A549 (cell line): ENCODE measurements at regions of chr10 and their contacts with region 1.

Region 1: DNA sequence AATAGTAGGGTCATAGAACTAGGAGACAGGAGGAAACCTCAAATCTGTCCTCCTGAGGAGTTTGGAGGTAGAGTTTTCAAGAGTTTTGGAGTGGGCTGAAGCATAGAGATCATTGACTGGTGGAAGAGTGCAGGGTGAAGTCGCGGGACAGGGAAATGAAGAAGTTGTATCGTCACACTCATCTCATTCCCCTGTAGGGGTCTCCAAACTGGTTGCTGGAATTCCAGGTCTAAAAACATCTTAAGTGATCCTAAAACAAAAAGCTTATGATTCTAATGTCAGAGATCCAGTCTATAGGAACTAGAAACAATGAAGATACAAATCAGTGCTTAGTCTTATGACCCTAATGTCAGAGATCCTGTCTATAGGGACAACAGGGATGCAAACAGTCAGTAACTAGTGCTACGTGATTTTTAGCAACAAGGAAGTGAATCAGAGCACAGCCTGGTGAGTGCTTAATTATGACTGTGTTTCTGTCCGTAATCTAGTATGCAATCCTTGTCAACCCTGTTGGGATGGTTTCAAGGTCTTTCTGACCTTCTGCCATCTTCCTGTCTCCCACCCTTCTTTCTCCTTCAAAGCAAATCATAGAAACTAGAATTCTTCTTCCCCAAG is 139.4 kb downstream of the SKIDA1 start:
- DNase-seq: no peak
- ATAC-seq: no peak
- H3K4me3 ChIP-seq: no peak overlapping the region
- H3K27ac ChIP-seq: peak overlapping the region in 1 of 2 experiments; percentile 24; a peak in 1 of 6 replicates
- H3K4me1 ChIP-seq: no peaks in the 10 kb centered on the region
- CTCF ChIP-seq: no peak
- EP300 ChIP-seq: no peak
- POLR2A ChIP-seq: no peak
- RAD21 ChIP-seq: no peak

Region 2: DNA sequence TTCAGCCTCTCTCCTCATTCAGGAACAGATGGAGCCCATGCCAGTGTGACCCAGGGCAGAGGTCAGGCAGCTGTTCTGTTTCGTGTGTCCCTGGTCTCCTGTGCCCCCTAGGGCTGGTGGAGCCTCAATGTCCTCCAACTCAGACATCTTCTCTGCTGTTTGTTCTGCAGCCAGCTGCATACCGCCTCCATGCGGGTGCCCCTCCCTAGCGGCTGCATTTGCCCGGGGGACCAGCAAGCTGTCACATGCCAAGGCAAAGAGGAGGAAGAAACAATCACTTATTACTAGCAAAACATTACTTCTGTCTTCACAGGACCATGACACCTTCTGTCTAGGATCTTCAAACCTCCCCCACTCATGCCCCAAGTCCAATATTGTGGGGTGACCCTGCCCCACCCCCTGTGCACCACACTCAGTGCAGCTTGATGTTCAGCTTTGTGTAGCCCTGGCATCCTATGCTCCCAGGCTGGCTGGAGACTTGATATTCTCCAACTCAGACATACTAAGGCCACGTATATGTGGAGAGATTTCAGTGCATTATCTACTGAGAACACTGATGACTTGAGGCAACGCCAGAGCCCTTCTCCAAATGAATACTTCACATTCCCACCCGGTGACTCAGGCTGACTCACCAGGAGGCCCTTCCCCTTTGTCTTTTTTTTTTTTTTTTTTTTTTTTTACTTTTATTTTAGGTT is 49.5 kb before region 1 on chr10:
- CTCF ChIA-PET with region 1: no interaction called
- POLR2A ChIA-PET with region 1: no interaction called
- DNase-seq: peak; percentile 86 to 97
- ATAC-seq: peak; percentile 88 to 90
- H3K4me3 ChIP-seq: no peak overlapping the region
- H3K27ac ChIP-seq: peak overlapping the region; percentile 95 to 96
- H3K4me1 ChIP-seq: peaks cover 55% of the 10 kb centered on the region
- CTCF ChIP-seq: peak; percentile 31
- EP300 ChIP-seq: peak; percentile 58 to 73; a peak in 3 of 5 replicates
- POLR2A ChIP-seq: no peak
- RAD21 ChIP-seq: peak; percentile 63 to 75

Region 3: DNA sequence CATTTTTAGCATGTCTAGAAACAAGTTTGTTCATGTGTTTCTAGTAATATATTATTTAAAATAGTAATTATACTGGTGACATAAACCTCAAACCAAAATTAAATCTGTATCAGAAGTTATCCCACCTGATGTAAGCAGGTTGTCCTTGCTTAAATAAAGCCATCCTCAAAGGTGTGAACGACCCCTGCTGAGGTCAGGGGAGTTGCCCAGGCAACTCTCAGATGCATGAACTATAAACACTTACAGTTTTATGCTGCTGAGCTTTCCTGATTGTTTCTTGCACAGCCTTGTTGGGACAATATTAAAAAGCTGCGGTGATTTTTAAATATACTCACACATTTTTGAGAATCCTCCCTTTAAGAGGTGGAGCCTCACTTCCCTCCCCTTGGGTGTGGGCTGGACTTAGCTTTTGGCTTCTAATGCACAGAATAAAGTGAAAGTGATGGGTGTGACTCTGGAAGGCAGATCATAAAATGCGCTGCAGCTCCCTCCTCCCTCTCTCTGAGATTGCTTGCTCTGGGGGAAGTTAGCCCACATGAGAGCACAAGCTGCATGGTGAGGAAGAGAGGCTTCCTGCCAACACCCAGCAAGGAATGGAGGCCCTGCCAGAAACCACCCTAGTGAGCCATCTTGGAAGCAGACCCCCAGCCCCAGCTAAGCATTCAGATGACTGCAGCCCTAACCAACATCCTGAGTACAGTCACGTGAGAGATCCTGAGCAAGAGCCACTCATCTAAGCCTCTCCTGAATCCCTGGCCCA is 13.3 kb before region 1 on chr10:
- CTCF ChIA-PET with region 1: interaction called, 10 read pairs
- POLR2A ChIA-PET with region 1: no interaction called
- DNase-seq: peak; percentile 82 to 91
- ATAC-seq: peak; percentile 97 to 98
- H3K4me3 ChIP-seq: peak overlapping the region; percentile 24
- H3K27ac ChIP-seq: peak overlapping the region; percentile 80 to 86
- H3K4me1 ChIP-seq: peaks cover 66% of the 10 kb centered on the region
- CTCF ChIP-seq: no peak
- EP300 ChIP-seq: no peak
- POLR2A ChIP-seq: no peak
- RAD21 ChIP-seq: peak in 1 of 2 experiments; percentile 30; a peak in 1 of 5 replicates

Region 4: GRCh38 chr10:21427804-21428481 is 41.8 kb after region 1 on chr10:
- CTCF ChIA-PET with region 1: no interaction called
- POLR2A ChIA-PET with region 1: no interaction called
- DNase-seq: peak in 1 of 2 experiments; percentile 76
- ATAC-seq: peak; percentile 47 to 70; a peak in 4 of 6 replicates
- H3K4me3 ChIP-seq: no peak overlapping the region
- H3K27ac ChIP-seq: peak overlapping the region; percentile 1 to 73; a peak in 3 of 6 replicates
- H3K4me1 ChIP-seq: peaks cover 3% of the 10 kb centered on the region; the same call in 1 of the 3 replicates
- CTCF ChIP-seq: no peak
- EP300 ChIP-seq: no peak
- POLR2A ChIP-seq: no peak
- RAD21 ChIP-seq: no peak

Region 5: GRCh38 chr10:21510241-21511074 is 124.4 kb after region 1 on chr10:
- CTCF ChIA-PET with region 1: no interaction called
- POLR2A ChIA-PET with region 1: no interaction called
- DNase-seq: no peak
- ATAC-seq: no peak
- H3K4me3 ChIP-seq: no peak overlapping the region
- H3K27ac ChIP-seq: no peak overlapping the region
- H3K4me1 ChIP-seq: peaks cover 58% of the 10 kb centered on the region
- CTCF ChIP-seq: no peak
- EP300 ChIP-seq: no peak
- POLR2A ChIP-seq: no peak
- RAD21 ChIP-seq: no peak

Region 6: GRCh38 chr10:21599582-21599981 is 213.5 kb after region 1 on chr10:
- CTCF ChIA-PET with region 1: no interaction called
- POLR2A ChIA-PET with region 1: no interaction called
- DNase-seq: no peak
- ATAC-seq: 0 out of 6 replicates have a peak, but pooled peaks of 1 of the 2 experiments have one; percentile 26
- H3K4me3 ChIP-seq: no peak overlapping the region
- H3K27ac ChIP-seq: no peak overlapping the region
- H3K4me1 ChIP-seq: peaks cover 8% of the 10 kb centered on the region; the same call in 1 of the 3 replicates
- CTCF ChIP-seq: no peak
- EP300 ChIP-seq: no peak
- POLR2A ChIP-seq: no peak
- RAD21 ChIP-seq: no peak